HEK293 (cell line): ENCODE measurements at regions of chr10 and their contacts with region 1.

Region 1: DNA sequence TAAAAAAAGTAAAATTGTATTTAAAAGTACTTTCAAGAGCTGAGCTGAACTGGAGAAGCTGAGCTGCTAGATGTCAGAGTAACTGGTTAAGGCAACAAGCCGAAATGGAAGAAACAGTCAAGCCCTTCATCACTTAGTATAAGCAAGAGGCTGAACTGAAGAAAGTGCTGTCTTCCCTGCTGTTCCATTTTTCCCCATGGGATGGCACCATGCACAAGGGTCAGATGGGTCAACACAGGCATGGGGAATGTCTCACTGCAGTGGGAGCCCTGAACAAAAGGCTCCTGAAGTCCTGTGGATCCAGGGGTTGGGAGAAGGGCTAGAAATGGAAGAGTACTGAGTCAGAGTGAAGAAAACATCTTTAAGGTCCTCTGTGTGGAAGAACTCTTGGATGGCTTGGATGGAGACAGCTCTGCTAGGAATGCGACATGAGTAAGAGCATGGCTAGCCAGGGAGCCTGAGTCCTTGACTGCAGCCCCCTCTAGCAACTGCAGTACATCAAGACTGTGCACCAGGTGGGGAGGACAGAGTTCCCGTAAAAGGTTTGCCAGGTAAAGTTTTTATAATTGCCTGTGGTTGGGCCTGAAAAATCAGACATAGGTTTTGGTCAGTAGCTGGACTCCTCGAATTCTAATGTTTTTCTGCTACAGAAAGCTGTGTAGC is 348.3 kb downstream of the GPR158 start:
- H3K4me3 ChIP-seq: no peak overlapping the region
- H3K27ac ChIP-seq: no peak overlapping the region
- H3K4me1 ChIP-seq: no peaks in the 10 kb centered on the region
- CTCF ChIP-seq: no peak

Region 2: DNA sequence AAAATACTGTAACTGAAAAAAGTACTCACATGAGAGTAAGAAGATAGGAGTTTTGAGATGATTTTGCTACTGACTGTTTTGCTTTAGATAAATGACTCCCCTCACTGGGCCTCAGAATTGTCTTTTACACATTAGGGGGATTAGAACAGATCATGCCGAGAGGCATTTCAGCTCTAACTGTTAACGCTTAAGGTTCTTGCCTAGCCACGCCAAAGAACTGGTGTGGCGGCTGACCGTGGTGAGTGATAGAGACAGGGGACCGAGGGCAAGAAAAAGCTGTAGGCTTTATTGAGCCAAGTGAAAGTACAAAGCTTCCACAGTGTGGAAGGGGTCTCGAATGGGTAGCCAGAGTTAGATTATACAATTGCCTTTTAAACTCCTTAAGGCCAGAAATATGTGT is 42.5 kb after region 1 on chr10:
- CTCF ChIA-PET with region 1: no interaction called
- POLR2A ChIA-PET with region 1: no interaction called
- H3K4me3 ChIP-seq: no peak overlapping the region
- H3K27ac ChIP-seq: no peak overlapping the region
- H3K4me1 ChIP-seq: no peaks in the 10 kb centered on the region
- CTCF ChIP-seq: no peak

Region 3: GRCh38 chr10:25639646-25640045 is 116.6 kb after region 1 on chr10:
- CTCF ChIA-PET with region 1: interaction called, 17 read pairs
- POLR2A ChIA-PET with region 1: no interaction called
- H3K4me3 ChIP-seq: no peak overlapping the region
- H3K27ac ChIP-seq: no peak overlapping the region
- H3K4me1 ChIP-seq: no peaks in the 10 kb centered on the region
- CTCF ChIP-seq: no peak